AG04449 (cell line): ENCODE measurements at regions of chr2 and their contacts with region 1.

Region 1: DNA sequence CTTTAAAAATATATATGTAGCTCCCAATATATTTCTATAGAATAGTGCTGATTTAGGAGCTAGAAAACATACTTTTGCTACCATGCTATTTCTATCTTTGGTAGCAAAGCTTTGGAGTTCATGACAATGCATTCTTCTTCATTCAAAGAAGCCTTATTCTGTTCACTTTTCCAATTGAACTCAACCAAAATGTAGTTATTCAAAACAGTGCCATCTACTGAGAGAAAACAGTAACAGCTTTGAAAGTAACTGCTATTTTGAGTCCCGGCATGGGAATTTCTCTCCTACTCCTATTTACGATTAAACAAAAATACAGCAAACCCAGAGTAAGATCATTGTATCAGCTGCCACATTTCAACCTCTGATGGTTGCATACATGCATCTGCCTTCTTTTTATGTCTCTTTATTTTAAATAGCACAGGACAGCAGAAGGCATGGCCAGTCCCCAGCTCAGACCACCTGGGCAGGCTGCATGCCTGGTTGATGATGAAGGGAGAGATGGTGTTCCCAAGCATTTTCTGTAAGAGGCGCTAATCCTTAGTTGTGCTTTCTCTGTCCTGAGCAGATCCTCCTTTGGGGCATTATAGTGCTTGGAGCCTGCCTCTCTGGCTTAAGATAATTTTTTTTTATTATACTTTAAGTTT is 69.7 kb upstream of the SULT1C3 start:
- DNase-seq: no peak
- H3K4me3 ChIP-seq: no peak overlapping the region
- CTCF ChIP-seq: peak; percentile 48

Region 2: DNA sequence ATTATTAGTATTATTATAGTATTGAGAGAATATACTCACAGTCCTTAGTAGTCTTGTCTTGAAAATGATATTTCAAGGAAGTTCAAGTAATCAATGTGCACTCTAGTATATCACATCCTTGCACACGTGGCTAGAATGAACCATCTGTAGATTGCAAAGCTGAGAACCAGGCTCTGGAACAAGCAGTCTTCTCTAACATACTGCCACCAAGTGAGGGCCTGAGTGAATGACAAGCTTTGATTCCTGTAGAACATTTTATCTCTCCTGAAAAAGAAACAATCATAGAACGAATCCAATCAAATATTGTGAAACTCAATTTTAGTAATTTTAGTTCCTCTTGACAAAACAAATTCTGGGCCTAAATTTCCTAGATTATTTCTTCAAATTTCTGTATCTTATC is 14.3 kb after region 1 on chr2:
- CTCF ChIA-PET with region 1: interaction called, 14 read pairs
- POLR2A ChIA-PET with region 1: no interaction called
- DNase-seq: no peak
- H3K4me3 ChIP-seq: no peak overlapping the region
- CTCF ChIP-seq: peak; percentile 38